BJ (cell line): ENCODE measurements at regions of chr3 and their contacts with region 1.

Region 1: GRCh38 chr3:53130179-53131061 is at the start of gene RFT1:
- DNase-seq: peak; percentile 64
- H3K4me3 ChIP-seq: peak within 1 kb of the TSS; percentile 93
- H3K27me3 ChIP-seq: no peaks in the 10 kb centered on the region
- CTCF ChIP-seq: peak; percentile 27
- polyA plus RNA-seq, gene RFT1: 27.9 and 33.5 TPM in 2 replicates

Region 2: GRCh38 chr3:52907497-52907896 is 222.9 kb before region 1 on chr3:
- CTCF ChIA-PET with region 1: no interaction called
- POLR2A ChIA-PET with region 1: no interaction called
- DNase-seq: no peak
- H3K4me3 ChIP-seq: no peak overlapping the region
- H3K27me3 ChIP-seq: no peaks in the 10 kb centered on the region
- CTCF ChIP-seq: no peak

Region 3: GRCh38 chr3:53140847-53141845 is 10.7 kb after region 1 on chr3:
- CTCF ChIA-PET with region 1: interaction called, 78 read pairs
- POLR2A ChIA-PET with region 1: no interaction called
- DNase-seq: no peak
- H3K4me3 ChIP-seq: no peak overlapping the region
- H3K27me3 ChIP-seq: no peaks in the 10 kb centered on the region
- CTCF ChIP-seq: no peak

Region 4: GRCh38 chr3:53160660-53161449 is 30.4 kb after region 1 on chr3 and contains the start of gene PRKCD:
- CTCF ChIA-PET with region 1: interaction called, 16 read pairs
- POLR2A ChIA-PET with region 1: no interaction called
- DNase-seq: no peak
- H3K4me3 ChIP-seq: peak within 1 kb of the TSS; percentile 94
- H3K27me3 ChIP-seq: peaks cover 9% of the 10 kb centered on the region
- CTCF ChIP-seq: peak; percentile 58
- polyA plus RNA-seq, gene PRKCD: 24.2 and 33.5 TPM in 2 replicates